ENCODE measurements at regions of chr4 and their contacts with region 1.

Region 1: DNA sequence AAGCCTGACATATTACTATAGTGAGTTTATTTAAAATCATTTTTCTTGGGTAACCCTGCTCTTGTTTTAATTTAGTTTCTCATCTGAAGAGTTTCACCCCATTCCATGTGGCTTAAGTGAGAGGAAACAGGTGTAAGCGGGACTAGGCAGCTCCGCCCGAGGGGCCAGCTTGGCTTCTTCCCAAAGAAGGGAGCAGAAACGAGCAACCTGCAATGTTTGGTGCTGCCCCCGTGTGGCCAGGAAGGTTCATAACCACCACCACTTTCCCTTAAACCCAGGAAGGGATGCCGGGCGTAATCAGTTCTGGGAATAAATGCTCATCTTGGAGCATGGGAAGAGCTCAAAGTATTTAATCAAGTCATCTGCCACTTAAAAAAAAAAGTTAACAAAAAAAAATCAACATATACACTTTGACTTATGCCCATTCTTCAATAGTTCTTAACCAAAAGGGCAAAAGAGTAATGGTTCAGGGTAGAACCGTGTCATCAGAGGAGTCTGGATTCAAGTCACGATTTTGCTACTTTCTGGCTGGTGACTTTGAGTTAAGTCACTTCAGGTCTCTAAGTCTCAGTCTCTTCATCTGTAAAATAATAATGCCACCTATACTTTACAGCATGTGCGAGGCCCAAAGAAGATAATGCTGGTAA is 147.9 kb downstream of the NSUN7 start:
- DNase-seq: peak; percentile 23 to 76
- ATAC-seq: peak in 2 of 3 donors; percentile 62 to 70
- H3K4me3 ChIP-seq: no peak overlapping the region
- H3K4me3 Mint-ChIP-seq: no peak overlapping the region
- H3K27ac ChIP-seq: no peak overlapping the region
- H3K27ac Mint-ChIP-seq: no peak overlapping the region
- H3K4me1 ChIP-seq: peaks cover 3% of the 10 kb centered on the region
- H3K4me1 Mint-ChIP-seq: peaks cover 5% of the 10 kb centered on the region in 2 donors
- H3K27me3 ChIP-seq: no peaks in the 10 kb centered on the region
- H3K27me3 Mint-ChIP-seq: no peaks in the 10 kb centered on the region
- CTCF ChIP-seq: peak; percentile 82

Region 2: GRCh38 chr4:40056716-40057585 is 840.7 kb before region 1 on chr4 and contains the start of gene N4BP2:
- intact Hi-C with region 1: loop called (anchors 10 kb)
- DNase-seq: peak; percentile 63 to 89
- ATAC-seq: peak; percentile 65 to 81 (median 76)
- H3K4me3 ChIP-seq: peak within 1 kb of the TSS; percentile 65
- H3K4me3 Mint-ChIP-seq: peak within 1 kb of the TSS; percentile 95
- H3K27ac ChIP-seq: peak within 1 kb of the TSS; percentile 91
- H3K27ac Mint-ChIP-seq: peak within 1 kb of the TSS; percentile 91 to 95
- H3K4me1 ChIP-seq: peaks cover 18% of the 10 kb centered on the region
- H3K4me1 Mint-ChIP-seq: peaks cover 26 to 39% of the 10 kb centered on the region in 2 donors
- H3K27me3 ChIP-seq: no peaks in the 10 kb centered on the region
- H3K27me3 Mint-ChIP-seq: no peaks in the 10 kb centered on the region
- CTCF ChIP-seq: peak; percentile 74
- total RNA-seq, gene N4BP2: 16.4 to 22.4 (median 17.5) TPM

Region 3: DNA sequence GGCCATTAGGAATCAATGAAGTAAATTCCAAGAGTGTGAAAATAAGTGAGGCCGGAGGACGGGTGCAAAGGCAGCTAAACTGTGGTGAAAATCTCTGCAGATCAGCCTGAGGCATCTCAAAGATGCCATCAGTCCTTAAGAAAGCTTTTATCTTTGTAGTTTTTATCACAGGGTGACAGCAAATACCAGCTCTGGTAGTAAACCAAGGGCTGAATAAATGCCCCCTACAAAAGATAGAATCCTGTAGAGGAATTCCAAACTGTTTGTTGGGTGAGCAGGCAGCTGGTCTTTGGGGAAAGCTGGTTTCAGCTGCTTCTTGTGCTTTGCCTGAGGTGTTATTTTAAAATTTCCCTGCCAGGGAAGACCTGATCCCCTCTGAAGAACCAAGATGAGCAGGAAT is 246.4 kb before region 1 on chr4:
- intact Hi-C with region 1: no loop called
- DNase-seq: no peak
- ATAC-seq: no peak
- H3K4me3 ChIP-seq: no peak overlapping the region
- H3K4me3 Mint-ChIP-seq: no peak overlapping the region
- H3K27ac ChIP-seq: no peak overlapping the region
- H3K27ac Mint-ChIP-seq: no peak overlapping the region
- H3K4me1 ChIP-seq: no peaks in the 10 kb centered on the region
- H3K4me1 Mint-ChIP-seq: no peaks in the 10 kb centered on the region
- H3K27me3 ChIP-seq: no peaks in the 10 kb centered on the region
- H3K27me3 Mint-ChIP-seq: no peaks in the 10 kb centered on the region
- CTCF ChIP-seq: no peak

Region 4: GRCh38 chr4:40662962-40663604 is 234.6 kb before region 1 on chr4:
- intact Hi-C with region 1: no loop called
- DNase-seq: no peak
- ATAC-seq: no peak
- H3K4me3 ChIP-seq: no peak overlapping the region
- H3K4me3 Mint-ChIP-seq: no peak overlapping the region
- H3K27ac ChIP-seq: no peak overlapping the region
- H3K27ac Mint-ChIP-seq: no peak overlapping the region
- H3K4me1 ChIP-seq: no peaks in the 10 kb centered on the region
- H3K4me1 Mint-ChIP-seq: no peaks in the 10 kb centered on the region
- H3K27me3 ChIP-seq: no peaks in the 10 kb centered on the region
- H3K27me3 Mint-ChIP-seq: no peaks in the 10 kb centered on the region
- CTCF ChIP-seq: no peak

Region 5: DNA sequence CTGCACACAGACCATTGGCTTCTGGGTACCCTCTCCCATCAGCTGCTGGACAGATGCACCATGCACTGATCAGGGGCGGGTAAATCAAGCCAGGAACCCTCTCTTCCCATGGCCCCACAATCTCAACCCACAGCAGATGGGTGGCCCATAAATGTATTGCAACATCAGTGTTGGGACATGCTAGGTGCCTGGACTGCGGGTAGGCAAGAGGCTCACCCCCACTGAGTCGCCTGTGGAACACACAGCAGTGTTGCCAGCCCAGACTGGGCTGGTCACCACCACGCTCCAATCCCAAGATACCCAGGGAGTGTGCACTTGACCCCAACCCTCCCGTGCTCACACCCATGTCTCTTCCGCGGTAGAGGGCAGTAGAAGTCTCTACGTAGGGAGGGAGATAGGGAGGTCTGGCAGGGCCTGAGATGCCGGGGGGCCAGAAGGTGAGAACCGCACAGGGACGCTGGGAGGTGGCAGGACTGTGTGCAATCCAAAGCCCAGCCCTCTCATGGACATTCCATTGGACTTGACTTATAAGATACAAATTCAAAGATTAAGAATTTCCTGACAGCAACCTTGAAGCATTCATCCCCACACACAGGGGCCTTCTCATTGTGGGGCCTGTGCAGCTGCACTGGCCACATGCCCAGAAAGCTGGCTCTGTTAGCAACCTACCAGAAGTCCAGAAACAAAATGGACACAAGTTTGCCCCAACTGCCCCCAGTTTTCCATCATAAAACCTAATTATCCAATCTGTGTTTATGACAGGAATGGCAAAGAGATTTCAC is 35.8 kb after region 1 on chr4:
- intact Hi-C with region 1: no loop called
- DNase-seq: no peak
- ATAC-seq: no peak
- H3K4me3 ChIP-seq: no peak overlapping the region
- H3K4me3 Mint-ChIP-seq: no peak overlapping the region
- H3K27ac ChIP-seq: no peak overlapping the region
- H3K27ac Mint-ChIP-seq: no peak overlapping the region
- H3K4me1 ChIP-seq: no peaks in the 10 kb centered on the region
- H3K4me1 Mint-ChIP-seq: no peaks in the 10 kb centered on the region
- H3K27me3 ChIP-seq: no peaks in the 10 kb centered on the region
- H3K27me3 Mint-ChIP-seq: peaks cover 0 to 4% of the 10 kb centered on the region in 2 donors
- CTCF ChIP-seq: no peak

Region 6: DNA sequence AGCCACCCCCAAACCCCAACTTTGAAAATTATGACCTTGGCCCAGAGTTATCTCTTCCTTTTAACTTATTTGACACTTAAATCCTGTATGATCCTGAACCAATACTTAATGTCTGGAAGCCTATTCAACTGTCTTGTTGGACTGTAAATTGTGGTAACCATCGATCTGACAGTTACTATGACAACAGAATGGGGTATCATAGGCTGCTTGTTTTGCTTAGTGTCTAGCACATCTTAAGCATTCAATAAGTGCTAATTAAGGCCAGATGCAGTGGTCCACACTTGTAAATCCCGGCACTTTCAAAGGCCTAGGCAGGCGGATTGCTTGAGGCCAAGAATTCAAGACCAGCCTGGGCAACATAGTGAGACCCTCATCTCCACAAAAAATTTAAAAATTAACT is 141.6 kb after region 1 on chr4:
- intact Hi-C with region 1: no loop called
- DNase-seq: no peak
- ATAC-seq: no peak
- H3K4me3 ChIP-seq: no peak overlapping the region
- H3K4me3 Mint-ChIP-seq: no peak overlapping the region
- H3K27ac ChIP-seq: no peak overlapping the region
- H3K27ac Mint-ChIP-seq: no peak overlapping the region
- H3K4me1 ChIP-seq: no peaks in the 10 kb centered on the region
- H3K4me1 Mint-ChIP-seq: no peaks in the 10 kb centered on the region
- H3K27me3 ChIP-seq: no peaks in the 10 kb centered on the region
- H3K27me3 Mint-ChIP-seq: peaks cover 0 to 3% of the 10 kb centered on the region in 2 donors
- CTCF ChIP-seq: no peak

Measured in natural killer cell (primary cell).